Common myeloid progenitor, CD34-positive (primary cell): ENCODE measurements at regions of chr4 and their contacts with region 1.

Region 1: DNA sequence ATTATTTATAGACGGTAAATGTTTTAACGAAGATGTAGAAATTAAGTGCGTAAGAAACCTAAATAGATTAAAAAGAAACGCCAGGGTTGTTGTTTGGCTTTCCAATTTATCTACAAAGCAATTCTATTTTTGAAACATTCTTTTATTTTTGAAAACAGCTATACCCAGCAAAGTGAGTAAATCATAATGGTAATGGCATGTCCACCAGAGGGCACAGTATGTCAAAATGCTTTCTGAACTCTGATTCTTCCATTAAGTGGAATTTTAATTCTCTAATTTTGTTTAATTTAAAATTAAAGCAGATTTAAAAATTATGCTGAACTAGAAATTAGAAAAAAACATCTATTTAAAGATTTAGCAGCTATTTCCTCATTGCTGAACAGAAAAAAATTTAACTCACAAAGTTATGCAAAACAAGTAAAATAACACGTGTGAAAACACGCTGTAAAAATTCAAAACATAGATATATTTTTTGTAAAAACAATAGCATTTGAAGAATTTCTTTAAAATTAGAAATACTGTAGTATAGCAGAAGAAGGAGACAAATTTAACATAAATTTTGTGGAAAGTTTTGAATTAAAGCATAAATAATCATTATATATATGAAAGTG is 26.5 kb downstream of the RASSF6 start:
- DNase-seq: peak; percentile 49 to 77 (median 72)
- H3K4me3 ChIP-seq: no peak overlapping the region
- H3K27ac ChIP-seq: no peak overlapping the region
- H3K4me1 ChIP-seq: peaks cover 0 to 7% (median 1%) of the 10 kb centered on the region in 4 experiments
- H3K27me3 ChIP-seq: no peaks in the 10 kb centered on the region

Region 2: GRCh38 chr4:73583666-73584065 is 10.1 kb before region 1 on chr4:
- CTCF ChIA-PET with region 1: interaction called, 13 read pairs
- POLR2A ChIA-PET with region 1: no interaction called
- DNase-seq: no peak
- H3K4me3 ChIP-seq: no peak overlapping the region
- H3K27ac ChIP-seq: no peak overlapping the region
- H3K4me1 ChIP-seq: no peaks in the 10 kb centered on the region
- H3K27me3 ChIP-seq: no peaks in the 10 kb centered on the region

Region 3: DNA sequence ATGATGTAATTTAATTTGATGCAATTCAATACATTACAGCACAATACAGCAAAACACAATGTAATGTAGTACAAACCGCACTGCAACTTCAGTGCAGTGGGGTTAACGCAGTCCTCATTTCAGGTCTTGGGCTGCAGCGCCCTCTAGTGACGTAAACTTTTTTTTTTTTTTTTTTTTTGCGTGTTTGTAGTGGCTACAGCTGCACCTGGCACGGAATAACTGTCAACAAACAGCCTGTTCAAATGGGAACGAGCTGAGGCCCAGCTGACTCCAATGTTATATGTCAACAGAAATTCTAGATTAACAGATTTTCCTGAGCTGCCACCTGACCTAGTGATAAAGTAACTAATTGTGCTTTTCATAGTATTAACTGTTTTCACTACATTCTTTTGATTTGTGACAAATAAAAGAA is 60.0 kb after region 1 on chr4:
- CTCF ChIA-PET with region 1: interaction called, 65 read pairs
- POLR2A ChIA-PET with region 1: no interaction called
- DNase-seq: peak; percentile 67 to 89 (median 88)
- H3K4me3 ChIP-seq: no peak overlapping the region
- H3K27ac ChIP-seq: no peak overlapping the region
- H3K4me1 ChIP-seq: peaks cover 0 to 7% (median 7%) of the 10 kb centered on the region in 4 experiments
- H3K27me3 ChIP-seq: no peaks in the 10 kb centered on the region